Spleen (tissue), 13 donors: ENCODE measurements at regions of chr21 and their contacts with region 1.

Region 1: DNA sequence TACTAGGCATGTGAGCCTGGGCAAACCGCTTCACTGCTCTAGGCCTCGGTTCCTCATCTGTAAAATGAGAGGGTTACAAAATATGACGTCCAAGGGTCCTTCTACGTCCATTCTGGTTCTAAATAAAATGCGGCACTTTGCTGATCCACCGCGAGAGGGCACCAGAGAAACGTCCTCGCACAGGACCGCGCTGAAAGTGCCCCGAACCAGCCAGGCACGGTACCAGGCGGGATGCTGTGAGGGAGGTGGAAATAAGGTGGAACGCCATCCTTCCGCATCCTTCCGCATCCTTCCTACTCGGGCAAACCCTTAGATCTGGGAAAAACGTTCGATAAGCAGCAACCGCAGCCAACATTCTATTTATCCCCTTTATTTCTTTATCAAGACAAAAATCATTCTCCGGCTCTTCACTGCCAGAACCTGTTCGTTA is 60.3 kb upstream of the KRTAP19-8 start:
- DNase-seq: peak; percentile 87
- H3K4me3 ChIP-seq: no peak overlapping the region
- H3K27ac ChIP-seq: no peak overlapping the region
- H3K4me1 ChIP-seq: peaks cover 0 to 16% (median 5%) of the 10 kb centered on the region in 6 donors
- H3K27me3 ChIP-seq: peaks cover 0 to 10% (median 0%) of the 10 kb centered on the region in 7 donors
- CTCF ChIP-seq: peak; percentile 53 to 81 (median 74)
- POLR2A ChIP-seq: no peak

Region 2: GRCh38 chr21:31180256-31181081 is 81.9 kb after region 1 on chr21:
- intact Hi-C with region 1: loop called (anchors 5 kb)
- DNase-seq: no peak
- H3K4me3 ChIP-seq: no peak overlapping the region
- H3K27ac ChIP-seq: peak overlapping the region in 1 of 8 donors; percentile 15
- H3K4me1 ChIP-seq: peaks cover 0 to 14% (median 11%) of the 10 kb centered on the region in 6 donors
- H3K27me3 ChIP-seq: no peaks in the 10 kb centered on the region
- CTCF ChIP-seq: peak in 7 of 11 experiments; percentile 42 to 57 (median 50)
- POLR2A ChIP-seq: no peak

Region 3: GRCh38 chr21:31265366-31266013 is 166.9 kb after region 1 on chr21:
- intact Hi-C with region 1: no loop called
- DNase-seq: no peak
- H3K4me3 ChIP-seq: no peak overlapping the region
- H3K27ac ChIP-seq: no peak overlapping the region
- H3K4me1 ChIP-seq: no peaks in the 10 kb centered on the region
- H3K27me3 ChIP-seq: peaks cover 0 to 16% (median 0%) of the 10 kb centered on the region in 7 donors
- CTCF ChIP-seq: no peak
- POLR2A ChIP-seq: no peak

Region 4: GRCh38 chr21:31354604-31355443 is 256.2 kb after region 1 on chr21:
- intact Hi-C with region 1: no loop called
- DNase-seq: no peak
- H3K4me3 ChIP-seq: no peak overlapping the region
- H3K27ac ChIP-seq: peak overlapping the region in 1 of 8 donors; percentile 40
- H3K4me1 ChIP-seq: no peaks in the 10 kb centered on the region
- H3K27me3 ChIP-seq: no peaks in the 10 kb centered on the region
- CTCF ChIP-seq: no peak
- POLR2A ChIP-seq: no peak